A673 (cell line): ENCODE measurements at regions of chr11 and their contacts with region 1.

Region 1: DNA sequence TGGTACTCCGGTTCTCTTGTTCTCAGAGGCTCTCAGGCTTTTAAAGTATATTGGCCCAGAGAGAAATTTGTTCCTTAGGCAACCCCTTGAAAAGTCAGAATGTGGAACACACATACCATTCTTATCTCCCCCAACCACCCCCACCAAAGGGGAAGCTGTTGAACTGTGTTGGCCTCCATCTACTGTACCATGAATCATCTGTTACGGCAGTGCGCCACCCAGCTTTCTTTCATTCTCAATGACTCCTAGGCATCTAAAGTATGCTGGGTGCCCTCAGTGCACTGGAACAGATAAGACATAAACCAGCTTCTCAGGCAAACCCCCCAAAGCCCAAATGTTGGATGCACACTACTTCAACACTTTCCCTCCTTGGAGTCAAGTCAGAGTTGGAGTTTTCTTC is 696.2 kb upstream of the TENM4 start:
- DNase-seq: no peak
- H3K4me3 ChIP-seq: no peak overlapping the region
- H3K27ac ChIP-seq: no peak overlapping the region
- H3K4me1 ChIP-seq: no peaks in the 10 kb centered on the region
- H3K27me3 ChIP-seq: no peaks in the 10 kb centered on the region
- CTCF ChIP-seq: no peak

Region 2: GRCh38 chr11:80024119-80024518 is 112.9 kb before region 1 on chr11:
- CTCF ChIA-PET with region 1: no interaction called
- POLR2A ChIA-PET with region 1: no interaction called
- intact Hi-C with region 1: no loop called
- DNase-seq: no peak
- H3K4me3 ChIP-seq: no peak overlapping the region
- H3K27ac ChIP-seq: no peak overlapping the region
- H3K4me1 ChIP-seq: no peaks in the 10 kb centered on the region
- H3K27me3 ChIP-seq: no peaks in the 10 kb centered on the region
- CTCF ChIP-seq: no peak

Region 3: GRCh38 chr11:80103142-80103859 is 33.7 kb before region 1 on chr11:
- CTCF ChIA-PET with region 1: no interaction called
- POLR2A ChIA-PET with region 1: no interaction called
- intact Hi-C with region 1: loop called (anchors 1 kb)
- DNase-seq: peak; percentile 36
- H3K4me3 ChIP-seq: no peak overlapping the region
- H3K27ac ChIP-seq: no peak overlapping the region
- H3K4me1 ChIP-seq: no peaks in the 10 kb centered on the region
- H3K27me3 ChIP-seq: no peaks in the 10 kb centered on the region
- CTCF ChIP-seq: no peak